ENCODE measurements at regions of chr5 and their contacts with region 1.

Region 1: DNA sequence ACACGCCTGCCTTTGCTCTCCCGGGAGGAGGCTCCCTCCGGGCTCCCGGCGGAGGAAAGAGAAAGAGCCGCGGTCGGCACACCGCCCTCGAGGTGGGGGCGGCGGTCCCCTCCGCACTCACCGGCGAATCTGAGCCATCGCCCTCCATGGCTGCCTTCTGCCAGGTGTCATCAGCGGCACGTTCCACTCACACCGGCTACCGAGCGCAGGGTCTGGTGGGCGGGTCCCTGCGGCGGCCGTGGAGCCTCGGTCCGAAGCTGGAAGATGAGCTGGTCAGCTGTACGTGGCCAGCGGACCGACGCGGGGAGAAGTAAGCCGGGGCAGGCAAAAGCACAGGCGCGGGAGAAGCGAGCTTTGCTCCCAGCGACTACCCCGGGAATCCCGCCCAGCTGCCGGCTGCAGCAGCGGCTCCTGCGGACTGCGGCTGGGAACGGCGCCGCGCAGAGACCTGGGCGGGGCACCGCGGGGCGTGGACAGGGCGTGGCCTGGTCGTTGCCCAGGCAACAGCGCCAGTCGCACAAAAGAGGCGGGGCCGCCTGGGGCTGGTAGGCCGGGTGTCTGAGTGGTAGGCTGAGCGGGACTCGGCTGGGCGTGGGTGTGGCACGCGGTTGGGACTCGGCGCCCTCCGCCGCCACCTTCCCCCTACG is at the start of gene TRIM36:
- DNase-seq: peak; percentile 50
- ATAC-seq: peak; percentile 99
- H3K4me3 ChIP-seq: peak within 1 kb of the TSS; percentile 86
- H3K27ac ChIP-seq: no peak within 1 kb of the TSS
- H3K4me1 ChIP-seq: no peaks in the 10 kb centered on the region
- H3K27me3 ChIP-seq: peaks cover 2 to 25% of the 10 kb centered on the region in 2 experiments
- CTCF ChIP-seq: peak; percentile 13 to 36 (median 26); a peak in 4 of 6 replicates
- EP300 ChIP-seq: no peak
- POLR2A ChIP-seq: peak; percentile 48; the same call in 1 of the 2 replicates
- RAD21 ChIP-seq: no peak
- polyA plus RNA-seq, gene TRIM36: not detected

Region 2: DNA sequence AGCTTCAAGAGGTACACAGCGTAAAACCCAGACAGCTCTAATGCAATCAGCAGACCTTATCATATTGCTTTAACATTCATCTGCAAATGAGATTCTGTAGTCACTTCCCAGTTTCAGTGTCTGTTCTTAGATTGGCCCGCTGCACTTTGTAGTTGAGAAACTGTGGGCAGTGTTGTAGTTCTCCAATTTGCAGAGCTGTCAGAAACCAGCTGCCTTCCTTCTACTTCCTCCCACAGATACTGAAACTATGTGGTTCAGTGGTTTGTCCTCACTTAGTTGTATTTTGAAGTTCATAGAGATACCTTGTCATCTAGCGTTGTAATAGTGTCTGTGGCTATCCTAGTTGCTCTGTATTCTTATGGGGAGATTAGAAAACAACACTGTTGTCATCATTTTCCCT is 39.7 kb after region 1 on chr5:
- CTCF ChIA-PET with region 1: no interaction called
- POLR2A ChIA-PET with region 1: interaction called, 4 read pairs
- RAD21 ChIA-PET with region 1: no interaction called
- SMC1A ChIA-PET with region 1: no interaction called
- in situ Hi-C with region 1: no loop called
- intact Hi-C with region 1: loop called (anchors 1 kb)
- DNase-seq: peak; percentile 95
- ATAC-seq: peak; percentile 99
- H3K4me3 ChIP-seq: no peak overlapping the region
- H3K27ac ChIP-seq: no peak overlapping the region
- H3K4me1 ChIP-seq: peaks cover 5% of the 10 kb centered on the region
- H3K27me3 ChIP-seq: no peaks in the 10 kb centered on the region
- CTCF ChIP-seq: no peak
- EP300 ChIP-seq: peak; percentile 91 to 92
- POLR2A ChIP-seq: no peak
- RAD21 ChIP-seq: no peak

Measured in GM12878 (cell line).